Activated T-helper 2 cell treated with anti-CD3 and anti-CD28 coated beads, Interferon-gamma antibody, Interleukin-2, Interleukin-4, amounts not matched to agents 10 μg/mL and 5 μg/mL and 100 μg/mL, durations not matched to agents 14 hours and 24 hours and 36 hours (primary cell): ENCODE measurements at regions of chr7 and their contacts with region 1.

Region 1: DNA sequence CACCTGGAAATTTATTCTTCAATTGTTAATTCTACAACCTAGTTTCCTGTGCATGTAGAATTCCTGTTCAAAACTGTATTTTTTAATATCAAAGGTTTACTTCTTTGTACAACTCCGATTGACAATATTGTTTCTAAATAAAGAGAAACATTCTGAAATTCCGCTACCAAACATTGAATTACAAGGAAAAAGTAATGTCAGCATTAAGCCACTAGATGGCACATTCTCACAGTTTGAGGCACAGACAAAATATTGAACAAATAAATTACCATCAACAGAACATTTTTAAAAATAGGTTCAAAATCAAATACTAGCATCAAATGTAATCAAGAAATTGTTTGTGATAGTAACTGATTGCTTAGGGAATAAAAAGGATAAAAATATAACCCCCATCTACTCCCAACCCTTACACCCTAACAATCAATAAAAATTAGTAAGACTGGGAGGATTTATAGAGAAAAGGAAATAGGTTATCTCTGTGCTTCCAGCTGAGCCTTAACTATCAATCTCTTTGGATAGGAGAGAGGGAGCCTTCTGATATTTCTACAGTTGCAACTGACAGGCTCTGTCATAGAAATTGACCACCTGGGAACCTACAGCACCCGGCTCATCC is 86.6 kb upstream of the C7orf33 start:
- DNase-seq: no peak
- H3K4me3 Mint-ChIP-seq: no peak overlapping the region
- H3K27ac Mint-ChIP-seq: no peak overlapping the region
- H3K4me1 Mint-ChIP-seq: peaks cover 23% of the 10 kb centered on the region
- H3K27me3 Mint-ChIP-seq: peaks cover 32% of the 10 kb centered on the region

Region 2: DNA sequence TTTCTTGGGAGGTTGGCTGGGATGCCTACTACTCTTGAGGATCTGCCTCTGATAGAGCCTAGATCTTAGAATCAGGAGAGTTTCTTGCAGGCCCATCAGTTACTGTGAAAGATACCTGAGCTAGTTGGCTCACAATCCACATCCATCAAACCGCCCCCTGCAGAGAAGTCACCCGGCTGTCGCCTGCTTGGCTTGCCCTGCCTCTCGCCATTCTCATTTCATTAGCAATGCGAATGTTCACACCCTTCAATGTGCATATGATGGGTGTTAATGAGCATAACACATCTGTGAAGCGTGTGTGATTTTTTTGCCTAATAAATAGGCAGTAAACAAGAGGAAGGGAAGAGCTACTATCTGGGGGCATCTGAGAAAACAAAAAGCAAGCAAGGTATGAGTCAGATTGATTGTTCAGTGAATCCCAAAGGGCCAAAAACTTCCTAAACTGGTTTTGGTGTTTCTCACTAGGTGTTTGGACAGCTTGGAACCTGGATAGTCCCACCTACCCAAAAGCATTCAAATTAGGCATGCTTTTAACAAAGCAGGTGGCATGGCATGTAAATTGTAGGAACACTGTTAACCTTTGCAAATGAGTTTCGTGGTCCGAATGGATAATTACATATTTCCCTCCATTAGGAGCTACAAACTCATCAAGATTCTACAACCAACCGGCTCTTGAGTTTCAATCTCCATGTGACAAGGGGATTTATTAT is 185.7 kb before region 1 on chr7:
- intact Hi-C with region 1: no loop called
- DNase-seq: no peak
- H3K4me3 Mint-ChIP-seq: no peak overlapping the region
- H3K27ac Mint-ChIP-seq: no peak overlapping the region
- H3K4me1 Mint-ChIP-seq: no peaks in the 10 kb centered on the region
- H3K27me3 Mint-ChIP-seq: no peaks in the 10 kb centered on the region

Region 3: DNA sequence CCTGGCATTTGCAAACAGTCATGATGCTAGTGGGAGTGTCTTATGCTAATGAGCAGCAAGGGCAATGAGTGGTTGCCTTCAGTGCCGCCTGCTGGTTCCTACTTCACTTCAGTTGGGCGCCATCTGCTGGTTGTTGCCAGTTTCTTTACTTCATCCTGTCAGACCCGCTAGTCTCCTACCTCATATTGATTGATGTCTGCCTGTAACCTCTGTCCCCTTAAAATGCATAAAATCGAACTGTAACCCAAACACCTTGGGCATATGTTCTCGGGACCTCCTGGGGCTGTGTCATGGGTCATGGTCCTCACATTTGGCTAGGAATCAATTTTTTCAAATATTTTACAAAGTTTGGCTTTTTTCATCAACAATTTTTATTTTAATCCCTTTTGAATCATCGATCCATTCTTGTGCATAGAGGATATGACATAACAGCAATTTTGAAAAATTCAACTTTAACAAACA is 23.8 kb after region 1 on chr7:
- intact Hi-C with region 1: loop called (anchors 1 kb)
- DNase-seq: peak; percentile 79
- H3K4me3 Mint-ChIP-seq: no peak overlapping the region
- H3K27ac Mint-ChIP-seq: no peak overlapping the region
- H3K4me1 Mint-ChIP-seq: peaks cover 3% of the 10 kb centered on the region
- H3K27me3 Mint-ChIP-seq: peaks cover 64% of the 10 kb centered on the region

Region 4: GRCh38 chr7:148563583-148564274 is 59.7 kb after region 1 on chr7:
- intact Hi-C with region 1: loop called (anchors 10 kb)
- DNase-seq: no peak
- H3K4me3 Mint-ChIP-seq: peak overlapping the region; percentile 44
- H3K27ac Mint-ChIP-seq: peak overlapping the region; percentile 75
- H3K4me1 Mint-ChIP-seq: peaks cover 16% of the 10 kb centered on the region
- H3K27me3 Mint-ChIP-seq: peaks cover 21% of the 10 kb centered on the region